ENCODE measurements at regions of chr6 and their contacts with region 1.

Region 1: DNA sequence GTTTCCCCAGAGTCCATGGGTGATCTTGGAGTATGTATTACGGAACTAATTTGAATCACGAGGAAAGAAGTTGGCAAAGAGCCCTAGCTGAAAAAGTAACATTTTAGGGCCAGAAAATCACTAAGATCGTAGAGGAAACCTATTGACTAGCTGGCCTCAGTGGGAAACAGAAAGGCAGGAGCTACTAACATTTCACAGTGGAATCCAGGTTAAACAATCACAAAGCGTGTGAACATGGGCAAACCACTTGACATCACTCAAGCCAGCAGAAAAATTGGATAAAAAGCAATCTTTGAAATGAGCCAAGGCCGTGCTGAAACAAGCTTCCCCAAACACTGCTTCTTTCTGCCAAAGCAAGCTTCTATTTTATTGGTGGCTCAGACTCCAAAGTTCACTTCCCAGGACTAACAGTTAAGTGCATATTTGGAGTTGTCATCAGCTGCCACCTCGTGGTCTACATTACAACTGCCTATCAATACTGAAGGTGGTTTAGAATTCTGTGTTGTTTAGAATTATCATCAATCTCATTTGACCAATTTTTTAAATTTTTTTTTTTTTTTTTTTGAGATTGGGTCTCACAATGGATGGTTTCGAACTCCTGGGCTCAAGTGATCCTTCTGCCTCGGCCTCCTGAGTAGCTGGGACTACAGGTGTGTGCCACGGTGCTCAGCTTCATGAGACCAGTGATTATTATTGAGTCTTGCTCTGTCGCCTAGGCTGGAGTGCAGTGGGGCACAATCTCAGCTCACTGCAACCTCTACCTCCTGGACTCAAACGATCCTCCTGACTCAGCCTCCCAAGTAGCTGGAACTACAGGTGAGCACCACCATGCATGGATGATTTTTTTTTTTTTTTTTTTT is 10.6 kb downstream of the RPS10 start:
- DNase-seq: no peak
- ATAC-seq: peak; percentile 85
- H3K4me3 ChIP-seq: no peak overlapping the region
- H3K27ac ChIP-seq: no peak overlapping the region
- H3K4me1 ChIP-seq: no peaks in the 10 kb centered on the region
- H3K27me3 ChIP-seq: no peaks in the 10 kb centered on the region
- CTCF ChIP-seq: peak; percentile 44 to 73 (median 65); a peak in 5 of 6 replicates
- EP300 ChIP-seq: no peak
- POLR2A ChIP-seq: no peak
- RAD21 ChIP-seq: peak; percentile 74

Region 2: DNA sequence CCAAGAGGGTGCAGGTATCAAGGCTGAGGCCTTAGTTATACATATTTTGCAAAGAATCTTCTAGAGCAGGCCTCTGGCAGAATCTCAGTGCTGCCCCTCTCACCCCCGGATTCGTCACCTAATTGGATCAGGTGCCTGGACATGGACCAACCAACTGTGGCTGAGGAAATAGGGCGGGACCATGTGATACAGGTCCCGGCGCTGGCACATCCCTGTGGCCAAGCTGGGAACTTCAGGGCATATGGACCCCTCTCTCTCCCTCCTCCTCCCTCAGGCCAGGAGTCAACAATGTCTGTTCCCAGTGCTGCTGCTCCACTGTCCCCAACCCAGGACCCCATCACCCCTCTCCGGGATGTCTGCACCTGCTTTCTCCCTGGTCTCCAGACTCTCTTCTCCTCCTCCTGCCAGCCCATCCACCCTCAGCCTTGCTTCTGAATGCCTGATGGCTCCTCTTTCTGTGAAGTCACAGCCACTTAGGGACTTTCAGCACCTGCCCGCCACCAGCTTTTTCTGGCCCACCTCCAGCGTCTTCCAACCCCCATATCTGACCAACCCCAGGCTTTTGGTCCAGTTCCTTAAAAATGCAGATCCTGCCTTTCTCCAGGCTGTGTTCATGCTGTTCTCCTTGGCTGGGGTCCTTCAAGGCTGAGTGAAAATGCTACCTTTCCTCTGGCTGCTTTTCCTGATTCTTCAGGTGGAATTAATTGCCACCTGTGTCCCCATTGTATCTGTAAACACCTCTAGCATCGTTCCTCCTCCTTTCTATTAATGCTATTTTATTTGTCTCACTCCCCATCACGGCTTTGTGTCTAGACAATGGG is 592.4 kb before region 1 on chr6:
- CTCF ChIA-PET with region 1: no interaction called
- POLR2A ChIA-PET with region 1: no interaction called
- RAD21 ChIA-PET with region 1: no interaction called
- SMC1A ChIA-PET with region 1: no interaction called
- in situ Hi-C with region 1: no loop called
- intact Hi-C with region 1: no loop called
- DNase-seq: no peak
- ATAC-seq: peak; percentile 88
- H3K4me3 ChIP-seq: no peak overlapping the region
- H3K27ac ChIP-seq: no peak overlapping the region
- H3K4me1 ChIP-seq: no peaks in the 10 kb centered on the region
- H3K27me3 ChIP-seq: peaks cover 0 to 2% of the 10 kb centered on the region in 2 experiments; a peak in 2 of 4 replicates
- CTCF ChIP-seq: peak; percentile 1 to 25 (median 4); a peak in 1 of 6 replicates
- EP300 ChIP-seq: no peak
- POLR2A ChIP-seq: no peak
- RAD21 ChIP-seq: no peak

Region 3: DNA sequence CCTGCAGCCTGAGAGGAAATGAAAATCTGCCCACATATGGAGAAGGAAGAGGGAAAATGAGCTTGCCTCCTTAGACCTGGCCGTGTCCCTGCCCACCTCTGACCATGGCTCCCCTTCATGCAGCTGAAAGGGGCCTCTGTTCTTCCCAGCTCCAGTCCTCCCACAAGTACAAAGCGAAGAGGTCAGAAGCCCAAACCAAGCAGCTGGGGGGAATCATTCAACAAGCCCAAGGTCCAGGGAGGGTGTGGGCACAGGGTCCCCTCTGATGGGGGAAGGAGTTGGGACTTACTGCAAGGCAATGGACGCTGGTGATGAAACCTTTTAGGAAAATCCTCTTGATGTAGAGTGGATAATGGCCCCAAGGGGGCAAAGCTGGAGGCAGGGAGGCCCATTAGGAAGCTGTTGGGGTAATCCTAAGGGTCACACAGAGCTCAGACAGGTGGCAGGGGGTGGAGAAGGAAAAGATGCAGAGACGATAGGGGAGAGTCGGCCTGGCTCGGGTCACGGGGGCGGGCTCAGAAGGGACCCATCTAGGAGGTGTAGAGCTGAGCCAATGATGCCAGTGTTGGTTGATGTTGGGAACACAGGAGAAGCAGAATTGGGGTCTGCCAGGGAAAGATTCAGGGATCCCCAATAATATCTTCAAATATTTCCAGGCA is 253.2 kb before region 1 on chr6:
- CTCF ChIA-PET with region 1: interaction called, 26 read pairs
- POLR2A ChIA-PET with region 1: no interaction called
- RAD21 ChIA-PET with region 1: interaction called, 3 read pairs
- SMC1A ChIA-PET with region 1: interaction called, 11 read pairs
- in situ Hi-C with region 1: no loop called
- intact Hi-C with region 1: loop called (anchors 2 kb)
- DNase-seq: no peak
- ATAC-seq: no peak
- H3K4me3 ChIP-seq: no peak overlapping the region
- H3K27ac ChIP-seq: no peak overlapping the region
- H3K4me1 ChIP-seq: no peaks in the 10 kb centered on the region
- H3K27me3 ChIP-seq: no peaks in the 10 kb centered on the region; a peak in 1 of 4 replicates
- CTCF ChIP-seq: no peak
- EP300 ChIP-seq: no peak
- POLR2A ChIP-seq: no peak
- RAD21 ChIP-seq: no peak

Region 4: GRCh38 chr6:34196126-34196830 is 219.0 kb before region 1 on chr6:
- CTCF ChIA-PET with region 1: interaction called, 56 read pairs
- POLR2A ChIA-PET with region 1: no interaction called
- RAD21 ChIA-PET with region 1: interaction called, 38 read pairs
- SMC1A ChIA-PET with region 1: interaction called, 30 read pairs
- in situ Hi-C with region 1: no loop called
- intact Hi-C with region 1: loop called (anchors 1 kb)
- DNase-seq: peak; percentile 28
- ATAC-seq: peak; percentile 99
- H3K4me3 ChIP-seq: peak overlapping the region; percentile 64
- H3K27ac ChIP-seq: no peak overlapping the region
- H3K4me1 ChIP-seq: peaks cover 8% of the 10 kb centered on the region
- H3K27me3 ChIP-seq: peaks cover 0 to 2% of the 10 kb centered on the region in 2 experiments; a peak in 1 of 4 replicates
- CTCF ChIP-seq: peak; percentile 94 to 98 (median 96)
- EP300 ChIP-seq: 0 out of 4 replicates have a peak, but pooled peaks of 1 of the 2 experiments have one; percentile 42
- POLR2A ChIP-seq: peak; percentile 77
- RAD21 ChIP-seq: peak; percentile 86

Region 5: GRCh38 chr6:34281702-34282334 is 133.4 kb before region 1 on chr6:
- CTCF ChIA-PET with region 1: interaction called, 10 read pairs
- POLR2A ChIA-PET with region 1: interaction called, 7 read pairs
- RAD21 ChIA-PET with region 1: no interaction called
- SMC1A ChIA-PET with region 1: interaction called, 4 read pairs
- in situ Hi-C with region 1: no loop called
- intact Hi-C with region 1: no loop called
- DNase-seq: no peak
- ATAC-seq: no peak
- H3K4me3 ChIP-seq: no peak overlapping the region
- H3K27ac ChIP-seq: no peak overlapping the region
- H3K4me1 ChIP-seq: peaks cover 10% of the 10 kb centered on the region
- H3K27me3 ChIP-seq: no peaks in the 10 kb centered on the region
- CTCF ChIP-seq: no peak
- EP300 ChIP-seq: no peak
- POLR2A ChIP-seq: no peak
- RAD21 ChIP-seq: no peak

Region 6: GRCh38 chr6:34332251-34333198 is 82.7 kb before region 1 on chr6:
- CTCF ChIA-PET with region 1: interaction called, 11 read pairs
- POLR2A ChIA-PET with region 1: no interaction called
- RAD21 ChIA-PET with region 1: interaction called, 3 read pairs
- SMC1A ChIA-PET with region 1: no interaction called
- in situ Hi-C with region 1: no loop called
- intact Hi-C with region 1: no loop called
- DNase-seq: no peak
- ATAC-seq: peak; percentile 81
- H3K4me3 ChIP-seq: no peak overlapping the region
- H3K27ac ChIP-seq: peak overlapping the region; percentile 65
- H3K4me1 ChIP-seq: peaks cover 26% of the 10 kb centered on the region
- H3K27me3 ChIP-seq: no peaks in the 10 kb centered on the region
- CTCF ChIP-seq: no peak
- EP300 ChIP-seq: no peak
- POLR2A ChIP-seq: no peak
- RAD21 ChIP-seq: no peak

Region 7: DNA sequence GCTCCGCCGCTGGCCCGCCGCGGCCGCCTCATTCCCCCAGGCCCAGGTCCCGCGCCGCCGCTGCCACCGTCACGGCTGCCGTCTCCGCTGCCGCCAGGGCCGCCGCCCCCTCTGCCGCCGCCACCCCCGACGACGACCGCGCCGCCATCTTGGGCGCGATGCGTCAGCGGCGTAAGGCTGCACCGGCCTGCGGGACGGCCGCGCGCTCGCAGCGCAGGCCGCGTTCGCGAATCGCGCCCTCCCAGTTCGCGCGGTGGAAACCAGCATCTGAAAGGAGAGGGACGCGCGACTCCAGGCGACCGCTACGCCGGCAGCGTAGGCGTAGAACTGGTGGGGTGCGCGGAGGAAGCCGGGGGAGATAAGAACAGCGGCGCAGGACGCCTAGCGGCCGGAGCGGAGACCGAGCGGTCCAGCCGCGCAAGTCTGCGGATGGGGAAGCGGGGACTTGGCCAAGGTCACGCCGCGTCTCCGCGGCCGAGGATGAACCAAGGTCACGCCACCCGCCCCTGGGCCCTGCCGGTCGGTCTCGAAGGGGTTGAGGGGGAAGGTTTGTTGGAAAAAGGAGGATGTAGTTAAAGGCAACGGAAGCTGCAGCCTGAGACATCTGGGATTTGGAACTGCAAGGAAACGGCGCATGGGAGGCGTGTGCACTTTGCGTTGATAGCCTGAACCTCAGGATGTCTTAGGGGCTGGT is 22.6 kb before region 1 on chr6 and contains the start of gene NUDT3:
- CTCF ChIA-PET with region 1: interaction called, 24 read pairs
- POLR2A ChIA-PET with region 1: interaction called, 13 read pairs
- RAD21 ChIA-PET with region 1: interaction called, 38 read pairs
- SMC1A ChIA-PET with region 1: interaction called, 27 read pairs
- in situ Hi-C with region 1: no loop called
- intact Hi-C with region 1: no loop called
- DNase-seq: peak; percentile 83
- ATAC-seq: peak; percentile 90
- H3K4me3 ChIP-seq: peak within 1 kb of the TSS; percentile 99
- H3K27ac ChIP-seq: peak within 1 kb of the TSS; percentile 75
- H3K4me1 ChIP-seq: peaks cover 3% of the 10 kb centered on the region
- H3K27me3 ChIP-seq: no peaks in the 10 kb centered on the region
- CTCF ChIP-seq: peak; percentile 90 to 93 (median 90)
- EP300 ChIP-seq: no peak
- POLR2A ChIP-seq: peak; percentile 95
- RAD21 ChIP-seq: peak; percentile 64
- polyA plus RNA-seq, gene NUDT3: 2.4 to 23.6 TPM

Region 8: DNA sequence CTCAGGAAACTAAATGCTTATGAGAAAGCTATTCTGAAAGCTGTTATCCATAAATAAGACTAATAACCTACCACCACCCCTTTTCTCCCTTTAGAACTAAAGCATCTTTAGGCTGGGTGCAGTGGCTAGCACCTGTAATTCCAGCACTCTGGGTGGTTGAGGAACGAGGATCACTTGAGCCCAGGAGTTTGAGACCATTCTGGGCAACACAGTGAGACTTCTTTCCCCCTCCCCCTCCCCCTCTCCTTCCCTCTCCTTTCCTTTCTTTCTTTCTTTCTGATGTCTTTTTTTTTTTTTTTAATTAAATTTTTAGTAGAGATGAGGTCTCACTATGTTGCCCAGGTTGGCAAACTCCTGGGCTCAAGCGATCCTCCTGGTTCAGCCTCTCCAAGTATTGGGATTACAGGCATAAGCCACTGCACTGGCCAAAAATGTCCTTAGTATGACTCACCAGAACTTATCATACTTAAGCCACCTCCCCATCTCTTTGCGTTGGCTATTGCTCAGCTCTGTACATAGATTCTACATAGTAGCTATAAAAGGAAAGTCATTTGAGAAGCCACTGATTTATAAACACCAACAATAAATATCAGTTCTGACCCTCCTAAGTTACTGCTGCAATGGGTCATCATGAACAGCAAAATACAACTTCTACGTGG is 195.7 kb after region 1 on chr6:
- CTCF ChIA-PET with region 1: interaction called, 5 read pairs
- POLR2A ChIA-PET with region 1: no interaction called
- RAD21 ChIA-PET with region 1: interaction called, 4 read pairs
- SMC1A ChIA-PET with region 1: interaction called, 16 read pairs
- in situ Hi-C with region 1: no loop called
- intact Hi-C with region 1: no loop called
- DNase-seq: no peak
- ATAC-seq: no peak
- H3K4me3 ChIP-seq: no peak overlapping the region
- H3K27ac ChIP-seq: no peak overlapping the region
- H3K4me1 ChIP-seq: peaks cover 3% of the 10 kb centered on the region; the same call in 1 of the 2 replicates
- H3K27me3 ChIP-seq: no peaks in the 10 kb centered on the region
- CTCF ChIP-seq: no peak
- EP300 ChIP-seq: no peak
- POLR2A ChIP-seq: no peak
- RAD21 ChIP-seq: no peak

Measured in GM12878 (cell line).